GM10248 (cell line): ENCODE measurements at regions of chr19 and their contacts with region 1.

Region 1: DNA sequence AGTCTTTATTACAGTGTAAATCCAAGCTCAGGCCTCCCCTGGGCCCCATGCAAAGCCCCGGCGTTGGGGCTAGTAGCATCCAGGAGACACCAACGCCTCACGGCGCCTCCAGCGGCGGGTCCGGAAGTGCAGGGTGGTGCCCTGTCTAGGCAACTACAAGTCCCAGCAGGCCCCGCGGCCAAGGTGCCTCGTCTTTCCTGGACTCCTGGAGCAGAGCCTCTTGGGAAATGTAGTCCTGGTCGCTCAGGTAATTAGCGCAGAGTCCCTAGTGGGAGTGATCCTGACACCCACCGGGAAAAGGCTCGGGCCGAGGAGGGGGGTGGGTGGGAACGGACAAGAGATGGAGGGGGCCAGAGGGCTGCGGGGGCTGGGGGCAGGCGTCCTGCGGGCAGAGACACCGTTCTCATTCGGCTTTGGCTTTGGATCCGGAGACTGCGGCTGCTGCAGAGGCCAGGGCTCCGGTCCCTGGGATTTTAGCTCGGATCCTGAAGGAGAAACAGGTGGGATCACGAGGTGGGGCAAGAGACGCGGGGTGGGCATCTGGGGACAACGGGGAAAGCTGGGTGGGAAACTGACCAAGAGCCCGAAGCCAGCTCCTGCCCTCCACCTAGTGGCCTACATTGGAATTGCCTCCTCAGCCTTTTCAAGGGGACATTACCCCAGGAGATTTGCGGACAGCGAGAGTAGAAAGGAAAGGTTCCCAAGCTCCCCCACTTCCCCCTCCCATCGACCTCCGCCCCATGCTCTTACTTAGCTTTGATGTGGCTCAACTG is 11.4 kb downstream of the RTN2 start:
- DNase-seq: peak; percentile 92
- CTCF ChIP-seq: peak; percentile 91

Region 2: GRCh38 chr19:45405435-45406225 is 79.9 kb before region 1 on chr19:
- CTCF ChIA-PET with region 1: interaction called, 16 read pairs
- POLR2A ChIA-PET with region 1: no interaction called
- DNase-seq: peak; percentile 88
- CTCF ChIP-seq: no peak

Region 3: DNA sequence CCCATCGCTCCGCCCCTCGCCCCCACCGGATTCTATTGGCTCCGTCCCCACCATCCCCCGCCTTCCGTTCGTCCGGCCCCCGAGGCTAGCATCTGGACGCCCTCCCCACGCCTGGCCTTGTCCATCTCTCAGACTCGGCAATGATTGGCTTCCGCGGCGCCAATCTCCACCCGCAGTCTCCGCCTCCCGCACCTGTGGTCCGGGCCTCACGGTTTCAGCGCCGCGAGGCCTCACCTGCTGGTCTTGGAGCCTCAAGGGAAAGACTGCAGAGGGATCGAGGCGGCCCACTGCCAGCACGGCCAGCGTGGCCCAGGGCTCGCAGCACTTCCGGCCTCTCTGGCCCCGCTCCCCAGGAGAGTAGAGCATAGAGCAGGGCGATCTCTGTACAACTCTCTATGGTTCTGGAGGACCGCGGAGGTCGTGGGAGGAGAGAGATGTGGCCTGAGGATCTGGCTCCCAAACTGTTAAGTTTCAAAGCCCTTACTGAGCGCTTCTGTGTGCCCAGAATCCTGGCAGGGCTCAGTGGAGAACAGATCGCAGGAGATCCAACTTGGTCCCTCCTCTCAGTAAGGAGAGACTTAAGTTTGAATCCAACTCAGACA is 61.8 kb before region 1 on chr19 and contains the start of gene ERCC1:
- CTCF ChIA-PET with region 1: interaction called, 86 read pairs
- POLR2A ChIA-PET with region 1: no interaction called
- DNase-seq: peak; percentile 98
- CTCF ChIP-seq: no peak

Region 4: DNA sequence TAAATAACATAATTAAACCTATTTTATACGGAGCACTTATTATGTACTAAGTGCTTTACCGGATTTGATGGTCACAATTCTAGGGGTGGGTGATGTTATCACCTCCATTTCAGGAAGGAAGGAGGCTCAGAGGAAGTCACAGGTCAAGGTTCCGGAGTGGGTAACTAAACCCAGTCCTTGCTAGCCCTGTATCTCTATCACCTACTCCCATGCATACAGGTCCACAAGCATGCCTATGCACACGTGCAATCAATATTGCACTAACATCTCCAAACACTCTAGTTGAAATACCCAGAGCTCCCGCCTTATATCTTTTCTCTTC is 35.5 kb before region 1 on chr19:
- CTCF ChIA-PET with region 1: interaction called, 87 read pairs
- POLR2A ChIA-PET with region 1: no interaction called
- DNase-seq: no peak
- CTCF ChIP-seq: no peak

Region 5: GRCh38 chr19:45496349-45496953 is 11.0 kb after region 1 on chr19:
- CTCF ChIA-PET with region 1: interaction called, 99 read pairs
- POLR2A ChIA-PET with region 1: interaction called, 3 read pairs
- DNase-seq: peak; percentile 48
- CTCF ChIP-seq: no peak

Region 6: GRCh38 chr19:45523642-45524256 is 38.3 kb after region 1 on chr19:
- CTCF ChIA-PET with region 1: interaction called, 7 read pairs
- POLR2A ChIA-PET with region 1: interaction called, 11 read pairs
- DNase-seq: peak; percentile 88
- CTCF ChIP-seq: peak; percentile 84

Region 7: DNA sequence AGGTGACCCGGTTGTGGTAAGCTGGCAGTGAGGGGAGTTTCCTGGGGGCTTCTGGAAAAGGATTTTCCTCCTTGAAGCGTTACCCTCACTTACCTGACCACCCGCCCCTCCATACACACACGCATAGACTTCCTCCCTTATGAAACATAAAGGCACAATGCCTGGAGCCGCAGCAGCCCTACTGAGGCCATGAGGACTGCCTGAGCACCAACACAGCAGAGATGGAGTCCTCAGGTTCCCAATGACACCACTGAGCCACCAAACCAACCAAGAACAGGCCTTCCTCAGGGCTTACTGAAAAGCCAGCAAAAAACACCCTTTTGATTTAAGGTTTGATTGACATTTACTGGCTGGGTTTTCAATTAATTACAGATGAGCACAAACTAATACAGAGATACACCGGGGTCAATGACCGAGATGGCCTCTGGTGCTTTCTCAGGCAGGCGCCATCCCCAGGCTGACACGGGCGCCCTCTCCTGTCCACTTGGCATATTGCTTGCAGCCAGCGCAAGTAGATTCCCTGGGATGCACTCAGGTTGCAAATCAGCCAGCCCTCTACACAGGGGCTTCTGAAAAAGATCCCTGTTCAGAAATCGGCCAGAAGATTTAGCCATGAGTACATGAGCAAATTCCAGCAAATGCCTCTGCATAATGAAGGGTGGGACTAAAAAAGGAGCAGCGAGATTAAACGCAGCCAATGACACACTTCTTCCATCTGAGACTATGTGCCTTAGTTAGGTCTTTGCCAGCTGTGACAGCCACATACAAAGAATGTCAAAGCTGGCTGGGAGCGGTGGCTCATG is 84.3 kb after region 1 on chr19:
- CTCF ChIA-PET with region 1: interaction called, 11 read pairs
- POLR2A ChIA-PET with region 1: no interaction called
- DNase-seq: peak; percentile 66
- CTCF ChIP-seq: peak; percentile 85